Lower lobe of right lung (tissue), 2 donors: ENCODE measurements at regions of chr6 and their contacts with region 1.

Region 1: GRCh38 chr6:151323791-151324487 is 67.4 kb downstream of the ZBTB2 start:
- DNase-seq: peak; percentile 81
- ATAC-seq: peak; percentile 93 to 94
- H3K4me3 ChIP-seq: peak overlapping the region; percentile 14
- H3K27ac ChIP-seq: peak overlapping the region; percentile 46
- H3K4me1 ChIP-seq: peaks cover 27% of the 10 kb centered on the region
- H3K27me3 ChIP-seq: no peaks in the 10 kb centered on the region
- CTCF ChIP-seq: peak; percentile 98

Region 2: GRCh38 chr6:150891888-150892485 is 432.0 kb before region 1 on chr6:
- intact Hi-C with region 1: loop called (anchors 10 kb)
- DNase-seq: no peak
- ATAC-seq: peak; percentile 70 to 78
- H3K4me3 ChIP-seq: no peak overlapping the region
- H3K27ac ChIP-seq: no peak overlapping the region
- H3K4me1 ChIP-seq: peaks cover 6% of the 10 kb centered on the region
- H3K27me3 ChIP-seq: no peaks in the 10 kb centered on the region
- CTCF ChIP-seq: peak; percentile 88

Region 3: DNA sequence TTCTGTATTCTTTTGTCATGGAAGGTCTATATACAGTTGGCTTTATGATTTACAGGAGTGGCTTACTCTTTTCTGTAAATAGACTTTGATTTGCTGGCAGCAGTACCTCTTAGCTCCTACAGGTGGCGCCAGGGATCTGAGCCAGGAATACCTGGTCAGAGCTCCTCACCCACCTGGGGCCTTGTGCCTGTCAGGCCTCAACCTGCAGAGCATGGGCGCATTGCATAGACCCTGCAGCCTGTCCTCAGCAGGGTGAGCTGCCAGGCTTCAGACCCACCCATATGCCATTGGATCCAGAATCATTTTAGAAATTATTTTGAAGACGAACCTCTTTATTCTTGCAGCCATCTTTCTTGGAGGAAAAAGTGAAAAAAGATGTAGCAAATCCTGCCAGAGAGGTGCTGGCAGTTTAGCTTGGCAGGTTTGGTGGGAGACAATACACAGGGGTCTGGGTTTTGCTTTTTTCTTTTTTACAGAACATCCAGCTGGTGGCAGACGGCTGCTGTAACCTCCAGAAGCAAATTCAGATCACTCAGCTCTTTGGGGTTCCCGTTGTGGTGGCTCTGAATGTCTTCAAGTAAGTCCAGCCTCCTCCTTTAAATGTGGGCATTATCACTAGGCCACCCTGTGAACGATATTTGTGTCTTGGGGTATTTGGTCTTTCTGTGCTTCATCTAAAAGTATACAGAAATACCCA is 309.4 kb before region 1 on chr6:
- intact Hi-C with region 1: loop called (anchors 5 kb)
- DNase-seq: peak; percentile 68
- ATAC-seq: peak; percentile 83 to 88
- H3K4me3 ChIP-seq: peak overlapping the region; percentile 14
- H3K27ac ChIP-seq: peak overlapping the region; percentile 42
- H3K4me1 ChIP-seq: peaks cover 8% of the 10 kb centered on the region
- H3K27me3 ChIP-seq: no peaks in the 10 kb centered on the region
- CTCF ChIP-seq: peak; percentile 99